Left ventricle myocardium superior (tissue), 1 donor: ENCODE measurements at regions of chr20 and their contacts with region 1.

Region 1: DNA sequence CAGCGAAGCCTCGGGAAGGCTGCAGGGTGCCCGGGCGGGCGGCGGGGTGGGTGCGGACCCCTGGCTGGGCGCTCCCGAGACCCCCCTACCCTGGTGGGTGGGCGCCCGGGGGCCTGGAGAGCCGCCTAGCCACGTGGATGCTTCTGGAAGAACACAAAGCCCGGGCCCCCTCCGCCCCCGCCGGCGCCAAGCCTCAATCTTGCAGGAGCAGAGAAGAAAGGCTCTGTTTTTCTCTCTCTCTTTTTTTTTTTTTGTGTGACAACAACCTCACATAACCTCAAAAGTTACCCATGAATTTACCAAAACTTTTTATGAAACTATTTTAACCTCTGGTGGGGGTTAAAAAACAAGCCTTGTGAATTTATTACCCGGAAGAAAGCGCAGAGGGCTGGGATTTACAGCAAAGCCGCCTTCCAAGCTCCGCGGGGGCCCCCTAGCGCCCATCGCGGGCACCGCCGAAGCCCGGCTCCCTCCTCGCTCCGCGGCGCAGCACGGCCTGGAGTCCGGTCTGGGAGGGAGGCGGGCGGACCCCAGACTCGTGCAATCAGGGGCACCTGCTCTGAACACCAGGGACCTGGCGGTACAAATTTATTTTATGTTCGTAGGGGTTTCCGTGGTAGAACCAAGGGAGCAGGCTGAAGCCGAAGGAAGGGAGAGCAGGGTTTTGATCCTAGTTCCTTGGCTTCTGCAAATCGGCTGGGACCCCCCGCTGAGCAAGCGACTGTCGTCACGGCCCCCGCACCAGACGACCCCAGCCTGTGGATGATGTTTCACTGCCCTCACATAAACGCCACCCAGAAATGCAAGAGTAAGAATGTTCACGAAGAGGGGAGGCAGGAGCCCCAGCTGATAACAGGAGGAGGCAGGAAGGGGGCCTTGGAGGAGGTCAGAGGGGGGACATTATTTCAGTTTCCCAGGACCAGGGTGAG is 58.9 kb downstream of the ZNF831 start:
- DNase-seq: peak; percentile 90
- ATAC-seq: peak; percentile 93

Region 2: GRCh38 chr20:59094576-59094975 is 127.9 kb before region 1 on chr20:
- intact Hi-C with region 1: loop called (anchors 5 kb)
- DNase-seq: no peak
- ATAC-seq: no peak